ENCODE measurements at regions of chr1 and their contacts with region 1.

Region 1: GRCh38 chr1:53860967-53861411 is 22.9 kb upstream of the NDC1 start:
- DNase-seq: peak in 1 of 2 experiments; percentile 58
- H3K4me3 ChIP-seq: no peak overlapping the region; a peak in 1 of 8 replicates
- H3K27ac ChIP-seq: no peak overlapping the region
- H3K4me1 ChIP-seq: peaks cover 0 to 3% (median 0%) of the 10 kb centered on the region in 4 experiments; a peak in 1 of 7 replicates
- H3K27me3 ChIP-seq: no peaks in the 10 kb centered on the region
- CTCF ChIP-seq: peak; percentile 46 to 93 (median 85)
- EP300 ChIP-seq: no peak
- POLR2A ChIP-seq: no peak
- RAD21 ChIP-seq: peak; percentile 91 to 92

Region 2: DNA sequence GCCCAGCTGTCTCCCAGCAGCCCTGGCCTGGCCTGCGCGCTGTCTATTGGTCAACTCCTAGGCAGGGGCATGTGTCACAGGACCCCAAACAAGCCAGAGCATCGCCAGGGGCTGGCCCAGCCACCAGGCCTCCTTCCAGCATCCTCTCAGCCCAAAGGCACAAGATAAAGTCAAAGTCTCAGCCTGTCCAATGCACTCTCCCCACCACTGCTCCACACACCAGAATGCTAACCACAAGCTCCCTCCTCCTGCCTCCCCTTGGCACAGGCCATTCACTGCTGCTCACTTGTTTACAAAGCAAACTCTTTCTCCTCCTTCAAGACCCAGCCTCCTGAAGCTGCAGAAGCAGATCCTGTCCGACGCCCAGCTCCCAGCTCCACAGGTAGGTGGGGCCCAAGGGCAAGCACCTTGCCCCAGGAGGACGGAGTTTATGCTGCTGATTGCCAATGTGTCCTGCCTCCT is 268.4 kb before region 1 on chr1:
- CTCF ChIA-PET with region 1: no interaction called
- POLR2A ChIA-PET with region 1: no interaction called
- DNase-seq: peak in 1 of 2 experiments; percentile 27
- H3K4me3 ChIP-seq: no peak overlapping the region
- H3K27ac ChIP-seq: no peak overlapping the region
- H3K4me1 ChIP-seq: peaks cover 0 to 7% (median 5%) of the 10 kb centered on the region in 4 experiments; a peak in 5 of 7 replicates
- H3K27me3 ChIP-seq: peaks cover 0 to 7% (median 1%) of the 10 kb centered on the region in 4 experiments; a peak in 4 of 7 replicates
- CTCF ChIP-seq: peak; percentile 22 to 53 (median 48); a peak in 3 of 4 replicates
- EP300 ChIP-seq: no peak
- POLR2A ChIP-seq: no peak
- RAD21 ChIP-seq: peak; percentile 29 to 42; a peak in 2 of 4 replicates

Region 3: DNA sequence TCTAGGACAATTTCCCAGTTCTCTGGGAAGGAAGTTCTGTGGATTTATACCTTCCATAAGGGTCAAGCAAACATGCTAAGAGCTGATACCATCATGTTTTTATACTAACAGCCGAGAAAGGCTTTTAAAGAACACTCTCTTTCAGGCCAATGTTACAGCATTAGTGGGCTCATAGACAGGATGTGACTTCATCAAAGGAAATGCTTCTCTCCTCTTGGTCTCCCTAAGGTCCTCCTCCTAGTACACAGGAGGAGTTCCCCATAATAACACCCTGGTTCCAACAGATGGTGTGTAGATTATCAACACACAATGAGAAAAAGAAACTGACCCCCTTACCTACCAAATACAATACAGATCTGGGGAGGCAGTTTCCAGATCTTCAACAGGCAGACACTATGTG is 95.3 kb before region 1 on chr1:
- CTCF ChIA-PET with region 1: interaction called, 11 read pairs
- POLR2A ChIA-PET with region 1: no interaction called
- DNase-seq: no peak
- H3K4me3 ChIP-seq: no peak overlapping the region
- H3K27ac ChIP-seq: no peak overlapping the region
- H3K4me1 ChIP-seq: no peaks in the 10 kb centered on the region; a peak in 1 of 7 replicates
- H3K27me3 ChIP-seq: no peaks in the 10 kb centered on the region
- CTCF ChIP-seq: no peak
- EP300 ChIP-seq: no peak
- POLR2A ChIP-seq: no peak
- RAD21 ChIP-seq: no peak

Region 4: DNA sequence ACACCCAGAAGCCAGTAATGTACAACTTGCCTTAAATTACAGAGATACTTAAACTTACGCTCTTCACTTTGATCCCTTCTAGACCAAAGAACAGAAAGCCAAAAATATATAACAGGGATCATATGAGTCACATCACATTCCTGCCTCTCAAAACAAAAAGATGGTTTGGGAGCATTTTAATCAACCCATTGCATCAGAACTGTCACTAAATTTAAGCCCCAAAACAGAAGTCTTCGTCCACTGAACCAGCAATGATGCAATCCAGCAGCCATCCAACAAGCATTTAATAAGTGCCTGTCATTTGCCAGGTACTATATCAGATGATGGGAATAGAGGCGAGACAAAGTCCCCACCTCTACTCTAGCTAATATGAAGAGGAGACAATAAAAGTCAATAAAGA is 79.3 kb before region 1 on chr1:
- CTCF ChIA-PET with region 1: no interaction called
- POLR2A ChIA-PET with region 1: no interaction called
- DNase-seq: no peak
- H3K4me3 ChIP-seq: no peak overlapping the region
- H3K27ac ChIP-seq: no peak overlapping the region
- H3K4me1 ChIP-seq: no peaks in the 10 kb centered on the region
- H3K27me3 ChIP-seq: no peaks in the 10 kb centered on the region
- CTCF ChIP-seq: no peak
- EP300 ChIP-seq: no peak
- POLR2A ChIP-seq: no peak
- RAD21 ChIP-seq: no peak

Region 5: DNA sequence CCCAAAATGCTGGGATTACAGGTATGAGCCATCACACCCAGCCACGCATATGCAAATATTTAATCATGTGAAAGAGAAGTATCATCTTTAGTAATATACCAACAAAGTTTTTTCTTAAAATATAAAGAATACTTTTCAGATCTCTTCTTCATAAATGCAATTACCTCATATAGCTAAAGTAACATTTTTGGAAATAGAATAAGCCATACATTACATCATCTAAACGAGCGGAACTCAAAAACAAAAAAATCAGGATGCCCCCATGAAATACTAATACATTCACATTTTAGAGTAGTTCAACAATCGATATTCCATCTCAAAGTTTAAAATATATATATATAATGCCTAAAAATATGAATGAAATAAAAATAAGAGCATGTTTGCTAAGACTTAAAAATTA is 27.6 kb before region 1 on chr1:
- CTCF ChIA-PET with region 1: interaction called, 10 read pairs
- POLR2A ChIA-PET with region 1: no interaction called
- DNase-seq: no peak
- H3K4me3 ChIP-seq: no peak overlapping the region
- H3K27ac ChIP-seq: no peak overlapping the region
- H3K4me1 ChIP-seq: no peaks in the 10 kb centered on the region
- H3K27me3 ChIP-seq: no peaks in the 10 kb centered on the region
- CTCF ChIP-seq: no peak
- EP300 ChIP-seq: no peak
- POLR2A ChIP-seq: no peak
- RAD21 ChIP-seq: no peak

Region 6: DNA sequence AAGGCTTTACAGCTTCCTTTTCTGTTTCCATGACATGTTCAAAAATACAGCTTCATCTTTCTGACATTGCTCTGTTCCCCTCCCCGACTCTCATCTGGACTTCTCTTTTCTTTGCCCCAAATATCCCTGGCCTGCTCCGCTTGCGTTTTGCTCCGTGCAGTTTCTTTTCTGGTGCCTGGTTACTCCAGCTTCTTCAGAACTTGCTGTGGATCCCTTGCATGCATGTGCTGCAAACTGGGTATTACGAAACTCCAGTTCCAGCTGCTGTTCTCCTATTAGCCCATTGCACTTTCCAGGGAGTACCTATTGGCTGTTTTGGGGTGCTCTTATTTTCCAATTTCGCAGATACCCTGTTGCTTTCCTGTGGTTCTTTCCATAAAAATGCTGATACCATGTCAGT is 13.0 kb before region 1 on chr1:
- CTCF ChIA-PET with region 1: interaction called, 50 read pairs
- POLR2A ChIA-PET with region 1: interaction called, 8 read pairs
- DNase-seq: no peak
- H3K4me3 ChIP-seq: no peak overlapping the region
- H3K27ac ChIP-seq: no peak overlapping the region
- H3K4me1 ChIP-seq: no peaks in the 10 kb centered on the region
- H3K27me3 ChIP-seq: no peaks in the 10 kb centered on the region
- CTCF ChIP-seq: no peak
- EP300 ChIP-seq: no peak
- POLR2A ChIP-seq: no peak
- RAD21 ChIP-seq: no peak

Region 7: DNA sequence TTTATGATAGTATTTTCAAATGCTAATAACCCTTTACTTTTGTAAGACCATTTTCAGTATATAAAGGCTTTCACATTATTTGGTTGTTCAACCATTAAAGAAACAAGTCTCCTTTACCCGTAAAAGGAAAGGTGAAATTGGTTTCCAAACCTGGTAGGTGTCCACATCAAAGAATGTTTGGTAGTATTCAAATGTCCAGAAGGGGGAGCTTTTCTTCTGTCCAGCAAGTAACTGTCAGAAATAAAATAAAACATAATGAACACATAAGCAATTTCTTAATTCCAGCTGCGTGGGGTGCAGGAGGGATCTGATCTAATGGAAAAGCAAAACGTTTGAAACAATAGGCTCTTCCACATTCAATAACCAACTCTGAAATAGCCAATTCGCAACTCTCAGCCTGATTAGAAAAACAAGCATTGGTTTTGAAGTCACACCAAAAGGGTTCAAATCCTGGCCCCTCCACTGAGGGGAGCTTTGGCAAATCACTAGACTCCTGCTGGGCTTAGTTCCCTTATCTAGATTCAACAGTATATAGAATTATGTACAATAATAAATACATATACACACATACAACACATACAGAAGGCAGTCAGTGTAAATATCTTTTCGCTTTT is 17.6 kb after region 1 on chr1:
- CTCF ChIA-PET with region 1: interaction called, 84 read pairs
- POLR2A ChIA-PET with region 1: interaction called, 3 read pairs
- DNase-seq: no peak
- H3K4me3 ChIP-seq: no peak overlapping the region
- H3K27ac ChIP-seq: no peak overlapping the region
- H3K4me1 ChIP-seq: no peaks in the 10 kb centered on the region
- H3K27me3 ChIP-seq: no peaks in the 10 kb centered on the region
- CTCF ChIP-seq: peak in 2 of 3 experiments; percentile 41 to 56; a peak in 2 of 4 replicates
- EP300 ChIP-seq: no peak
- POLR2A ChIP-seq: no peak
- RAD21 ChIP-seq: peak; percentile 53 to 55

Region 8: DNA sequence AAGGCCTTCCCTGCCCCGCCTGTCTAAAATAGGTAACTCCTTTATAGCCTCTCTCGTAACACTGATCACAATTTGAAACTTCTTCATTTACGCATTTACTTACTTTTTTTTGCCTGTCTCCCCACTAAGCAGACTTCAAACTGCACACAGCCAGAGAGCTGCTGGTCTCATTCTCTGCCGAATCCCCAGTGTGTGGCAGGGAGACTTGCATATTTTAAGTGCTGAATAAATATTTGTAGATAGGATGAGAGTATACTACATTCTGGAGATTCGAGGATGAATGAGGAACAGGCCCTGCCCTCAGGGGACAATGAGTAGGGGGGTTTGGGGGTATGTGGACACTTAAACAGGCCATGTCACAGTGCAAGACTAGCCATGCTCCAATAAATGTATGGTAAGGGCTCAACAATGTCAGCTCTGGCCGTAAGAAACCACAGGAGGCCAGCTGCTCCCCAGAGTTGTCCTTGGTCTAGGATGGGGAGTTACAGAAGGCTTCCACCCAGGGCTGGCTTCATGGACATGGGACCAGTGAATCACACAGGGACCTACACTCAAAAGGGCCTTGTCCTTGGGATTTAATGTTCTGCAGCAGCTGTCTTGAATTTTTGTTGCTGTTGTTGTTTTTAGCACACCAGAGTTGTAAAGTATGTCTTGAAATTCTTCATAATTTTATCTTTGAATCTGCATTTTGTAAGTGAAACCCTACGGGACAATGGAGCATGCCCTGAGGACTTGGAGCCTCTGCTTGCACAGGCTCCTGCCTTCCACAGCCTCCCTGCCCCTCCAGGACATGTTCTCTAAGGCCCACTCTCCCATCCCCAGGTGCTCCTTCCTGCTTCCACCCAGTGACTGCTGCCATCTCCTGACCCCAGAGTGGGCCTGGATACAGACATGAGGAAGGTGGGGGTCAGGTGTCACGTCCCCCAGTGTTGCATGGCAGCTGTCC is 41.5 kb after region 1 on chr1:
- CTCF ChIA-PET with region 1: no interaction called
- POLR2A ChIA-PET with region 1: no interaction called
- DNase-seq: no peak
- H3K4me3 ChIP-seq: no peak overlapping the region
- H3K27ac ChIP-seq: no peak overlapping the region
- H3K4me1 ChIP-seq: no peaks in the 10 kb centered on the region; a peak in 1 of 7 replicates
- H3K27me3 ChIP-seq: no peaks in the 10 kb centered on the region
- CTCF ChIP-seq: no peak
- EP300 ChIP-seq: no peak
- POLR2A ChIP-seq: no peak
- RAD21 ChIP-seq: no peak

Region 9: DNA sequence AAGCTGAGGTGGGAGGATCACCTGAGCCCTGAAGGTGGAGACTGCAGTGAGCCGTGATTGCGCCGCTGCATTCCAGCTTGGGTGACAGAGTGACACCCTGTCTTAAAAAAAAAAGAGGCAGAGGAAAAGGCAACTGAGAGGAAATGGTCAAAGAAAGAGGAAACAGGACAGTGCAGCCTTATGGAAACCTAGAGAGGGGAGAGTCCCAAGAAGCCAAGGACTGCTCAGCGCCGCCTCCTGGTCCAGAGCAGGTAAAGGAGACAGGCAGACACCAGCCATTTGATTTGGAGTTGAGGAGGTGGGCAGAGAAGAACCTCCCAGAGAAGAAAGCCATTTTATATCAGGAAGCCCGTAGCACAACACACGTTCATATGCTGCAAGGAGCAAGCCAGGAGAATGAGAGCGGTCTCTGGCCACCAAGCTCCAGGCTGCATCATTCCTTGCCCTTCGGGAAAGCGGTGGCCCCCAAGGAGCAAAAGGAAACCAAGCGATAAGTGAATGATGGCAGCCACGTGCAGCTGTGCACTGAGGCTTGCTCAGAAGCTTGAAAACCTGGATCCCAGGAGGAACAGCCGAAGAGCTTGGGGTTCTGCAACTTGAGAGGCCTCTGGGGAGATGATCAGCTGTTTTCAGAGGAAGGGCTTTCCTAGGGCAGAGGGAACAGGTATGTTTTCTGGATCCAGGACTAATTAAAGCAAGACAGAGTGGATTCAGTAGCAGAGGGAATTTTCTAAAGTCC is 118.9 kb after region 1 on chr1:
- CTCF ChIA-PET with region 1: interaction called, 14 read pairs
- POLR2A ChIA-PET with region 1: no interaction called
- DNase-seq: no peak
- H3K4me3 ChIP-seq: no peak overlapping the region
- H3K27ac ChIP-seq: no peak overlapping the region
- H3K4me1 ChIP-seq: peaks cover 0 to 5% (median 0%) of the 10 kb centered on the region in 4 experiments; a peak in 2 of 7 replicates
- H3K27me3 ChIP-seq: peaks cover 0 to 2% (median 0%) of the 10 kb centered on the region in 4 experiments; a peak in 1 of 7 replicates
- CTCF ChIP-seq: peak in 2 of 3 experiments; percentile 32 to 43; a peak in 3 of 4 replicates
- EP300 ChIP-seq: no peak
- POLR2A ChIP-seq: no peak
- RAD21 ChIP-seq: peak; percentile 15 to 37; a peak in 3 of 4 replicates

Measured in H1 (cell line).